Breast epithelium (tissue), 4 donors: ENCODE measurements at regions of chr1 and their contacts with region 1.

Region 1: GRCh38 chr1:229258031-229258756 is 12.7 kb upstream of the RAB4A start:
- DNase-seq: peak in 1 of 2 donors; percentile 60
- H3K4me3 ChIP-seq: no peak overlapping the region
- H3K27ac ChIP-seq: no peak overlapping the region
- H3K4me1 ChIP-seq: no peaks in the 10 kb centered on the region
- H3K27me3 ChIP-seq: no peaks in the 10 kb centered on the region
- CTCF ChIP-seq: peak; percentile 54 to 92 (median 90)
- POLR2A ChIP-seq: no peak

Region 2: DNA sequence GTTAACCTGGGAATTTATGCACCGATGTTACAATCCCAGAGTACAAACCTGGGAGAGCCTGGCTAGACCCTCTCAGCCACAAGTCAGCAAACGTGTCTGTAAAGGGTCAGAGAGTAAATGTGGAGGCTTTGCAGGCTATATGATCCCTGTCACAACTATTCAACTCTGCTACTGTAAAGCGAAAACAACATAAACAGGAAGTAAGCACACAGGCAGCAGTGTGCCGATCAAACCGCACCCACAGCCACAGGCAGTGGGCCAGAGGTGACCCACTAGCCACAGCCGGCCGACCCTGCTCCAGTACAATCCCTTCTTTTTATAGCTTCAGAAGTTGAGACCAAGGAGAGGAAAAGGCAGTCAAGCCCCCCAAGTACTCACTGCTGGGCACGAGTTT is 58.3 kb before region 1 on chr1:
- intact Hi-C with region 1: loop called (anchors 2 kb)
- DNase-seq: no peak
- H3K4me3 ChIP-seq: peak overlapping the region in 2 of 3 donors; percentile 3 to 39
- H3K27ac ChIP-seq: peak overlapping the region; percentile 65 to 68
- H3K4me1 ChIP-seq: peaks cover 4 to 16% of the 10 kb centered on the region in 2 donors
- H3K27me3 ChIP-seq: no peaks in the 10 kb centered on the region
- CTCF ChIP-seq: no peak
- POLR2A ChIP-seq: no peak

Region 3: DNA sequence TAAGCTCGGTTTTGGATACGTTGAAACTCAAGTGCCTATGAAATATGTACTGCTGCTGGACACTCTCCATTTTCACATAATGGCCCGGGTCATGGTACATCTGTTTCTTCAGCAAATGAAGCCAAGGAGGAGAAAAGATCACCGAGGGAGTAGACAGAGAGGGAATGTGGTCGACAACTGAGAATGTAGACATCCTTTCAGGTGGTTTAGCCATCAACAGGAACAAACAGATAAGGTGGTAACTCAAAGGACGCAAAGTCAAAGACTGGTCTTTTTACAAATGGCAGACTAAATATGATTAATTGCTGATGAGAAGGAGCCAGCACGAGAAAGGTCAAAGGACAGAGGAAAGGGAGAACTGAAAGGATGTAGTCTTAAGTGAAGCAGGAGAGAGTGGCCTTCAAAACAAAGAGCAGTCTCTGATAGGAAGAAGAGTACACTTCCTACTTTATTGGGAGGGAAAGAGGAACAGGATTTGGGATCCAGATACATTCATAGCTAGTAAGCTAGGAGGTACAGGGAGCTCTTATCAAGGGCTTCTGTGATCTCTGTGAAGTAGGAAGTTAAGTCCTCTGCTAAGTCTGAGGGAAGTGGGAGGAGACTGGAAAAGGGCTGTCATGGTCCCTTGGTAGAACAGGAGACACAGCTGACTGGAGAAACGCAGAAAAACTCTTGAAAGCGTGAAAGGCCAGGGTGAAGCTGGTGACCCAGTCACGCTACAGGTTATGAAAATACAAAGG is 221.6 kb after region 1 on chr1:
- intact Hi-C with region 1: loop called (anchors 10 kb)
- DNase-seq: no peak
- H3K4me3 ChIP-seq: no peak overlapping the region
- H3K27ac ChIP-seq: no peak overlapping the region
- H3K4me1 ChIP-seq: no peaks in the 10 kb centered on the region
- H3K27me3 ChIP-seq: no peaks in the 10 kb centered on the region
- CTCF ChIP-seq: no peak
- POLR2A ChIP-seq: no peak